Activated CD4-positive, alpha-beta memory T cell treated with anti-CD3 and anti-CD28 coated beads for 36 hours (primary cell): ENCODE measurements at regions of chr3 and their contacts with region 1.

Region 1: DNA sequence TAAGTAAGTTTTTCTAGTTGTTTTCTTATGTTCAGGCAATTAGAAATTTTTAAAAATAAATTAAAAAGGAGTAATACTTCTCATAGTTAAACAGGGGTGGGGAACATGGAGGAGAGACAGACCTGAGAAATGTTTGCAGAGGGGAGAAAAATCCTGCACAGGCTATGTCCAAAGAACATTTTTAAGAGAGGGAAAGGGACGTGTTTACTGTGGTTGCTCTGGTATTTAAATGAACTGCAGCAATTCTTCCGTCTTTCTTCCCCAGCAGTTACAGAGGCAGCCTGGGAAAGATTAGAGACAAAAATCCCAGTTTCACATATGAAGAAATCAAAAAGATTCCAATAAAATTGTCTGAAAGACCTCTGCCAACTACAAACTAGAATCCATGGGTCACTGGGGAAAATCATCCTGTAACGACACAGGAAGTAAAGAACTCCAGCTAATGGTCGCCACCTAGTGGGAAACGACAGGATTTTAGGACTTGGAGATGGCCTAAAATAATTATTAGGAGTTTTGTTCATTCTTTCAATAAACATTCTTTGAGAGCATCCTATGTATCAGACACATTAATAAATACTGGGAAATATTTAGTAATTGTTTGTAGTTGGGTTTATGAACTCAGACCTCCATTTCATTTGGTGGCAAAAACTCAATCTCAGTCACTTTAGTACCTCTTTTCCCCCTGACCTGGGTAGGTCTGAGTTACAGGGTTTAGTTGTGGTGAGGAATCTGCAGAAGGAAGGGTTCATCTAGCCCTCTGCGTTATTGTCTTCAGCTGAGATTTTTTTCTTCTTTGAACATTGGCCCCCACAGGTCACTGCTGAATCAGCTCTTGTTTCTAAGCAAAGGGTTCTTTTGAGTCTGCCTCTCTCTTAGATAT is 69.9 kb upstream of the GOLIM4 start:
- DNase-seq: peak; percentile 25
- H3K4me3 Mint-ChIP-seq: no peak overlapping the region
- H3K27ac Mint-ChIP-seq: no peak overlapping the region
- H3K4me1 Mint-ChIP-seq: peaks cover 3% of the 10 kb centered on the region
- H3K27me3 Mint-ChIP-seq: no peaks in the 10 kb centered on the region

Region 2: DNA sequence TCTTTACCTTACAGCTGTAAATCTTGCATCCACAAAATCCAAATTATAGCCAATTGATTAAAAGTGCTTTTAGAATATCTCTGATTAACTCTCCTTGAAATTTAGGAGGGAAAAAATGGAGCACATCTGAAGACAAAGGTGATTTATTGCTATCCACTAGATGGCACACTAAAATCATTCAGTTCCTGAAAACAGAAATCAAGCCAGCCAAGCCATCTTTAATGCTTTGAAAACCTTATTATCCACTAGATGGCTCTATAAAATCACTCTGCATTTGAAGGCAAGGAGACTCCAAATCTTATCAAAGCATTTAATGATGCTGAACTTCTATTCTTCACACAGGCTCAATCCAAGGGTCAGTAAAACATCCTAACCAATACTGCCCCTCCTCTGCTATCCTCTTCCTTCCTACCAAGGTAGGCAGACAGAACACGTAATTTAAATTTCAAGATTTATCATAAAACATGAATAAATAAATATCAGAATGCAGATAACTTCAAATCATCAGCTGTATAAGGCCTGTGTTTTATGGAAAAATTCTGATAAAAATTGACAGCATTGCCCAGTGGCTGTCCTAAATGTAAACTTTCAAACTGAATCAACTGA is 118.3 kb before region 1 on chr3:
- CTCF ChIA-PET with region 1: interaction called, 19 read pairs
- POLR2A ChIA-PET with region 1: no interaction called
- intact Hi-C with region 1: no loop called
- DNase-seq: no peak
- H3K4me3 Mint-ChIP-seq: no peak overlapping the region
- H3K27ac Mint-ChIP-seq: no peak overlapping the region
- H3K4me1 Mint-ChIP-seq: no peaks in the 10 kb centered on the region
- H3K27me3 Mint-ChIP-seq: no peaks in the 10 kb centered on the region

Region 3: GRCh38 chr3:168095611-168096209 is 69.9 kb before region 1 on chr3 and contains the start of gene GOLIM4:
- CTCF ChIA-PET with region 1: interaction called, 4 read pairs
- POLR2A ChIA-PET with region 1: no interaction called
- intact Hi-C with region 1: loop called (anchors 1 kb)
- DNase-seq: peak; percentile 66
- H3K4me3 Mint-ChIP-seq: peak within 1 kb of the TSS; percentile 67
- H3K27ac Mint-ChIP-seq: no peak within 1 kb of the TSS
- H3K4me1 Mint-ChIP-seq: peaks cover 10% of the 10 kb centered on the region
- H3K27me3 Mint-ChIP-seq: peaks cover 39% of the 10 kb centered on the region
- total RNA-seq, gene GOLIM4: 1.4 to 1.5 TPM

Region 4: GRCh38 chr3:168141405-168141998 is 24.1 kb before region 1 on chr3:
- CTCF ChIA-PET with region 1: no interaction called
- POLR2A ChIA-PET with region 1: no interaction called
- intact Hi-C with region 1: no loop called
- DNase-seq: no peak
- H3K4me3 Mint-ChIP-seq: no peak overlapping the region
- H3K27ac Mint-ChIP-seq: no peak overlapping the region
- H3K4me1 Mint-ChIP-seq: no peaks in the 10 kb centered on the region
- H3K27me3 Mint-ChIP-seq: no peaks in the 10 kb centered on the region